Upper lobe of right lung (tissue), 1 donor: ENCODE measurements at regions of chr11 and their contacts with region 1.

Region 1: GRCh38 chr11:87352759-87353707 is 315.3 kb downstream of the TMEM135 start:
- DNase-seq: peak; percentile 91
- ATAC-seq: peak; percentile 97
- H3K4me3 ChIP-seq: no peak overlapping the region
- H3K27ac ChIP-seq: no peak overlapping the region
- H3K4me1 ChIP-seq: peaks cover 11% of the 10 kb centered on the region
- H3K27me3 ChIP-seq: no peaks in the 10 kb centered on the region
- CTCF ChIP-seq: peak; percentile 100

Region 2: DNA sequence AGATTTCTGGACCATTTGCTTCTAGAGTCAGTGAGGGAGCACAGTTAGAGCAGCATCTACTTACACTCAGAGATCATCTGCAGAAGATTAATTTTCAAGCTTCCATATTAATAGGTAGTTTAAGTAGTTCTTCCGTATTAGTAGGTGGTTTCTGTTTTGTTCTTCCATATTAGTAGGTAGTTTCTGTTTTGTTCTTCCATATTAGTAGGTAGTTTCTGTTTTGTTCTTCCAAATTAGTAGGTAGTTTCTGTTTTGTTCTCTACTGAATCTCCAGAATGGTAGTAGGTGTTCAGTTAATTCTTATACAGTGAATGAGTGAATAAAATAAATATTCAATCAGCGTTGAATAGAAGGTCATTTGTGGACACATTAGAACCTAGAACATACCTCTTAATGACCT is 139.6 kb before region 1 on chr11:
- intact Hi-C with region 1: no loop called
- DNase-seq: no peak
- ATAC-seq: no peak
- H3K4me3 ChIP-seq: no peak overlapping the region
- H3K27ac ChIP-seq: no peak overlapping the region
- H3K4me1 ChIP-seq: no peaks in the 10 kb centered on the region
- H3K27me3 ChIP-seq: no peaks in the 10 kb centered on the region
- CTCF ChIP-seq: no peak

Region 3: DNA sequence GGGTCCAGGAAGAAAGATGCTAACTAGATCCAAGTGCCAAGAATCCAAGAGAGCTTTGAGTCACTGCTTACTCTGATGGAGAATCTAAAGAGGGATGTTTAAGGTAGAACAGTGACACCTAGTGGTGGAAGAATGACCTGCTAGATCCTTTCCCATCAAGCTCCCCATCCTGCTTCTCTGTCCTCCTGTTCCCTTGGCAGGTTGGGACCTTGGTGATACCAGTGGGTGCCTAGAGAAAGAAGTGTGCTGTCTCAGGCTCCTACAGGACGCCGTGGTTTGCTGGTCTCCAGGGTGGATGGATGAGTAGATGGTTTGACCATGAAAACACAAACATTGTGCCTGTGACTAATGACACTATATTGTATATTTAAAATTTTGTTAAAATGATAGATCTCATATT is 68.4 kb after region 1 on chr11:
- intact Hi-C with region 1: loop called (anchors 5 kb)
- DNase-seq: no peak
- ATAC-seq: peak; percentile 90
- H3K4me3 ChIP-seq: no peak overlapping the region
- H3K27ac ChIP-seq: no peak overlapping the region
- H3K4me1 ChIP-seq: no peaks in the 10 kb centered on the region
- H3K27me3 ChIP-seq: no peaks in the 10 kb centered on the region
- CTCF ChIP-seq: peak; percentile 85